ENCODE measurements at regions of chr10 and their contacts with region 1.

Region 1: GRCh38 chr10:121813211-121813815 is 114.5 kb downstream of the ATE1 start:
- DNase-seq: no peak
- ATAC-seq: no peak
- H3K4me3 ChIP-seq: no peak overlapping the region
- H3K4me3 Mint-ChIP-seq: no peak overlapping the region
- H3K27ac ChIP-seq: no peak overlapping the region
- H3K27ac Mint-ChIP-seq: no peak overlapping the region
- H3K4me1 ChIP-seq: no peaks in the 10 kb centered on the region
- H3K4me1 Mint-ChIP-seq: no peaks in the 10 kb centered on the region
- H3K27me3 ChIP-seq: no peaks in the 10 kb centered on the region
- H3K27me3 Mint-ChIP-seq: no peaks in the 10 kb centered on the region

Region 2: DNA sequence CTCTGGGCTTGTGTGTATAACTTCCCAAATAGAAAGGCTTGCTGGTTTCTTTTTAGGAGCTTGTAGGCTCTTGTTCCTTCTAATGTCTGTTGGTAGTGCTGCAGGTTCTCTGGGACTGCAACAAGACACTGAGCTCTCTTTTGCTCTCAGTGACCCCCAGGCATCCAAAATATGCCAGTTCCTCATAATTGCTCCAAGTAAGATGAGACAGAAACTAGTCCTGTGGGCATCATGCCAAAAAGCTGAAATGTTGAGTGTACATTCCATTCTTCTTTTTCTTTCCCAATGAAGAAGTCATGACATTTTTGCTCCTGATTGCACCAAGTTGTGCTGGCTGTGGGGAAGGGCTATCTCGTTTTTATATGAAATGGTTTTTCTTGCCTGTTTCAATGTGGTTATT is 450.7 kb after region 1 on chr10:
- CTCF ChIA-PET with region 1: interaction called in 1 of 2 experiments, 14 read pairs
- POLR2A ChIA-PET with region 1: no interaction called
- DNase-seq: no peak
- ATAC-seq: no peak
- H3K4me3 ChIP-seq: no peak overlapping the region
- H3K4me3 Mint-ChIP-seq: no peak overlapping the region
- H3K27ac ChIP-seq: no peak overlapping the region
- H3K27ac Mint-ChIP-seq: no peak overlapping the region
- H3K4me1 ChIP-seq: no peaks in the 10 kb centered on the region
- H3K4me1 Mint-ChIP-seq: no peaks in the 10 kb centered on the region
- H3K27me3 ChIP-seq: peaks cover 0 to 23% of the 10 kb centered on the region in 2 experiments
- H3K27me3 Mint-ChIP-seq: peaks cover 29 to 53% of the 10 kb centered on the region in 2 donors